A549 (cell line): ENCODE measurements at regions of chr2 and their contacts with region 1.

Region 1: GRCh38 chr2:191566344-191566743 is 111.6 kb upstream of the NABP1 start:
- DNase-seq: peak; percentile 61 to 67
- ATAC-seq: peak; percentile 82 to 92
- H3K4me3 ChIP-seq: no peak overlapping the region
- H3K27ac ChIP-seq: peak overlapping the region in 1 of 2 experiments; percentile 49; a peak in 2 of 6 replicates
- H3K4me1 ChIP-seq: peaks cover 7% of the 10 kb centered on the region
- CTCF ChIP-seq: peak; percentile 89
- EP300 ChIP-seq: no peak
- POLR2A ChIP-seq: no peak
- RAD21 ChIP-seq: peak; percentile 84 to 85

Region 2: DNA sequence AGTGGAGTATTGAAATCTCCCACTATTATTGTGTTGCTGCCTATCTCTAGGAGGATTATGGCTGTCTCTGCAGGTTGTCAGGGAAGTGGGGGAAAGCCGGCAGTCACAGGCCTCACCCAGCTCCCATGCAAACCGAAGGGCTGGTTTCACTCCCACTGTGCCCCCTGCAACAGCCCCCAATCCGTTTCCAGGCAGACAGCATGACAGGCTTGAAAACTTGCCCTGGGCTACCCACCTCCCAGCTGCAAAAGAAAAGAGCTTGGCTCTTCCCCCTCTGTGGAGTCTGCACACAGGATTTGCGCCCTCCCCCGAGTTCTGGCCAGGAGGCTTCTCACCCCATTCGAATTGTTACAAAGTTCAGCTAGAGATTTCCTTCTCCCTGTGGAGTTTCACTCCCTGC is 1416.4 kb before region 1 on chr2:
- CTCF ChIA-PET with region 1: no interaction called
- POLR2A ChIA-PET with region 1: no interaction called
- DNase-seq: no peak
- ATAC-seq: no peak
- H3K4me3 ChIP-seq: no peak overlapping the region
- H3K27ac ChIP-seq: no peak overlapping the region
- H3K4me1 ChIP-seq: no peaks in the 10 kb centered on the region
- CTCF ChIP-seq: no peak
- EP300 ChIP-seq: no peak
- POLR2A ChIP-seq: no peak
- RAD21 ChIP-seq: no peak

Region 3: DNA sequence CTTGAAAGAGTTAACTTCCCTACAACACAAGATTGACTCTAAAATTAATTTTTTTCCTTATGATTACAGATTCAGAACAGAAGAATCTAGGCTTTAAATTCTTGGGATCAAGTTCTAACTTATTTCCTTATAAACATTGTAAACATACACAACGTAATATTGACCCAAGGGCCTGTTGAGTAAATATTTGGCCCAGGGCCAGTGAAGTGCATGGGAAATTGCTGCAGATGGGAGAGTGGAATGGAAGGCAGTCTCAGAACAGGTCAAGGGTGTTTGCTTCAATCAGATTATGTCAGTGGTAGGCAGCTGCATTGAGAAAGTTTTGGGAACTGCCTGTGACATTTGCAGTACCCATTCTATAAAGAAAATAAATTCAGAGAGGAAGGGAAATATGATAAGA is 183.5 kb before region 1 on chr2:
- CTCF ChIA-PET with region 1: no interaction called
- POLR2A ChIA-PET with region 1: no interaction called
- DNase-seq: peak in 1 of 2 experiments; percentile 84
- ATAC-seq: peak; percentile 32 to 82; a peak in 3 of 6 replicates
- H3K4me3 ChIP-seq: no peak overlapping the region
- H3K27ac ChIP-seq: 0 out of 6 replicates have a peak overlapping the region, but pooled peaks have one; percentile 21 to 33
- H3K4me1 ChIP-seq: peaks cover 76% of the 10 kb centered on the region
- CTCF ChIP-seq: no peak
- EP300 ChIP-seq: no peak
- POLR2A ChIP-seq: no peak
- RAD21 ChIP-seq: no peak

Region 4: GRCh38 chr2:191521608-191522208 is 44.6 kb before region 1 on chr2:
- CTCF ChIA-PET with region 1: no interaction called
- POLR2A ChIA-PET with region 1: no interaction called
- DNase-seq: peak; percentile 41 to 51
- ATAC-seq: peak in 1 of 2 experiments; percentile 58; a peak in 2 of 6 replicates
- H3K4me3 ChIP-seq: no peak overlapping the region
- H3K27ac ChIP-seq: peak overlapping the region; percentile 28 to 31; a peak in 4 of 6 replicates
- H3K4me1 ChIP-seq: peaks cover 24% of the 10 kb centered on the region; the same call in 2 of the 3 replicates
- CTCF ChIP-seq: peak; percentile 94
- EP300 ChIP-seq: no peak
- POLR2A ChIP-seq: no peak
- RAD21 ChIP-seq: peak; percentile 91 to 95

Region 5: DNA sequence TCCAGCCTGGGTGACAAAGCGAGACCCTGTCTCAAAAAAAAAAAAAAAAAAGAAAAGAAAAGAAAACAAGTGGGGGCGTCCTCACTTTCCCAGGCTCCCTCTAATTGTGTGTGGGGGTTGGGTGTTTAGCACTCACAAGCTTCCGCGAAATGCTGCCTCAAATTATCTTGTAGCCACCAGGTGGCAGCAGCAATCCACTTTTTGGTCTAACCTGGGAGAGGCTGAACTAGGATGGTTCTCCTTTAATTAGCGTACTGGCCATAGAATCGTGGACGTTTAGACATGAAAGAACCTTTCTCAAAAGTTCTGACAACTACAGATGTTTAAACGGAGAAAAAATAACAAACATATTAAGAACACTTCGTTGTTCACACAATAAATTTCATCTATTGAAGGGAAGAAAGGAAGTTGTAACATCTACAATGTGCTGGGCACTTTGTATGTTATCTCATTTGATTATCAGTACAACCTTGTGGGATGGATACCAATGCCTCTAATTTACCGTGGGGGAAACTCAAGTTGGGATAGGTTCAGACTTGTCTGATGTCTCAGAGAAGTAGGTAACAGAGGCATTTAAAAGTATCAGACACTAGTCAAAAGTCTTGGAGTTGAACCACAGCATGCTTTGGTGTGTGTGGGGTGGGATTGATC is 11.1 kb before region 1 on chr2:
- CTCF ChIA-PET with region 1: interaction called, 66 read pairs
- POLR2A ChIA-PET with region 1: no interaction called
- DNase-seq: peak; percentile 60 to 76
- ATAC-seq: peak; percentile 95 to 97
- H3K4me3 ChIP-seq: no peak overlapping the region
- H3K27ac ChIP-seq: peak overlapping the region; percentile 7 to 36; a peak in 2 of 6 replicates
- H3K4me1 ChIP-seq: peaks cover 11% of the 10 kb centered on the region; the same call in 1 of the 3 replicates
- CTCF ChIP-seq: peak; percentile 89
- EP300 ChIP-seq: no peak
- POLR2A ChIP-seq: no peak
- RAD21 ChIP-seq: peak; percentile 91 to 95

Region 6: GRCh38 chr2:191691016-191691735 is 124.8 kb after region 1 on chr2:
- CTCF ChIA-PET with region 1: interaction called, 25 read pairs
- POLR2A ChIA-PET with region 1: interaction called, 4 read pairs
- DNase-seq: peak; percentile 68 to 81
- ATAC-seq: peak; percentile 72 to 76
- H3K4me3 ChIP-seq: no peak overlapping the region
- H3K27ac ChIP-seq: peak overlapping the region; percentile 29 to 69; a peak in 2 of 6 replicates
- H3K4me1 ChIP-seq: peaks cover 47% of the 10 kb centered on the region
- CTCF ChIP-seq: peak; percentile 84
- EP300 ChIP-seq: no peak
- POLR2A ChIP-seq: no peak
- RAD21 ChIP-seq: peak; percentile 83 to 84